Activated CD8-positive, alpha-beta T cell treated with anti-CD3 and anti-CD28 coated beads, Interleukin-2, amount 10 ng/mL, durations not matched to agents 7 days and 5 days (primary cell): ENCODE measurements at regions of chr19 and their contacts with region 1.

Region 1: DNA sequence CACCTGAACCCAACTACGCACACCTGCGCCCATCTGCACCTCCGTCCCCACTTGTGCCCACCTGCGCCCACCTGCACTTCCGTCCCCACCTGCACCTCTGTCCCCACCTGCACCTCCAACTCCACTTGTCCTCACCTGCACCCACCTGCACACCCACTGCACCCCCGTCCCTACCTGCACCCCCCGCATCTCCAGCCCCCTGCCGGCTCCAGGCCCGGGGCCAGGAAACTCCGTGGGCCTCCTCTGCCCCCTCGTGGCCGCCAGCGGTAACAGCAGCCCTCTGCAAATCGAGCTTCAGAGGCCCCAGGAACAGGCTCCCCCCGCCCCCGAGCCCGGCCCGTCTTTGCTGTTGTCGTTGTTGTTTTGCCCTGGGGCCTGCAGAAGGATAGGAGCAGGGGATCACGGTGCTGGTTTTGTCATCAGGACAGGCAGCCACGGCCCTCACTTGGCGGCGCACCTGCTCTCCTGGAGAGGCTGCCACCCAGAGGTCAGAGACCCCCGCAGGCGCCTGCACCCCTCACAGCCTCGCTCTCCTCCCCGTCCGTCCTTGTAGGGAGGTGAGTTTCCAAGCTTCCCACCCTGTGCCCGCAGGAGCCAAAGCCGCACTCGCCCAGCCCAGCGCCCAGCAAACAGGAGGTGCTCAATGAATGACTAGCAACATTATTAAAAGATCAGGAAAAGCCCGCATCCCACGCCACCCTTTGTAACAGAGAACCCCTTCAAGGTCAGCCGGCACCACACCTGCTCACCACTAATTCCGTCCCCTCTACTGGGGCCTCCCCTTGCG is 65.4 kb downstream of the GNG7 start:
- DNase-seq: peak; percentile 84
- ATAC-seq: peak; percentile 84
- H3K4me3 Mint-ChIP-seq: no peak overlapping the region
- H3K27ac Mint-ChIP-seq: no peak overlapping the region
- H3K4me1 Mint-ChIP-seq: peaks cover 14% of the 10 kb centered on the region
- H3K27me3 Mint-ChIP-seq: peaks cover 4% of the 10 kb centered on the region

Region 2: DNA sequence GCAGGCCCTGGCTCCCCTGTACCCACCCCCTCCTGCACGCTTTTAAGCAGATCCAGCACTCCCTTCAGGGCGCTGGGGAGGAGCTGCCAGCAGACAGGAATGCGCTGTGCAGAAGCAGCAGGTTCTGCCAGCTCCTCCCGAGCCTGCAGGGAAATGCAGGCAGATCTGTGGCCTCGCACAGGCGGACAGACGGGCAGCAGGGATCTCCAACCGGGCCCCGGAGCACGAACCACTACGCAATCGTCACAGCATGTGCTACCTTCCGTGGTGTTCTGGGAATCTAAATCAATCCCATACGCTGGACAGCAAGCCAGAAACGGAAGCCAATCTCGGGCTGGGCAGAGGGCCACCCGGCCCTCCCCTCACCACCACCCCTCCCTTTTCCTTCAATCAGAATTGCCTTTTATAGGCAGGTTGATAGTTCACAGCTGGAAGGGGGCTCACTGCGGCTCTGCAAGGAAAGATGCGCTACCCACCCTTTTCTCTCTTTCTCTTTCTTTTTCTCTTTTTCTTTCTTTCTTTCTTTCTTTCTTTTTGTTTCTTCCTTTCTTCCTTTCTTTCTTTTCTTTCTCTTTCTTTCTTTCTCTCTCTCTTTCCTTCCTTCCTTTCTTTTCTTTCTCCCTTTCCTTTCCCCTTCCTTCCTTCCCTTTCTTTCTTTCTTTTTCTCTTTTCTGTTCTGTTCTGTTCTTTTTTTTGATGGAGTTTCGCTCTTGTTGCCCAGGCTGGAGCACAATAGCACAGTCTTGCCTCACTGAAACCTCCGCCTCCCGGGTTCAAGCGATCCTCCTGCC is 34.5 kb before region 1 on chr19:
- CTCF ChIA-PET with region 1: interaction called, 14 read pairs
- POLR2A ChIA-PET with region 1: no interaction called
- DNase-seq: no peak
- ATAC-seq: no peak
- H3K4me3 Mint-ChIP-seq: no peak overlapping the region
- H3K27ac Mint-ChIP-seq: no peak overlapping the region
- H3K4me1 Mint-ChIP-seq: peaks cover 22% of the 10 kb centered on the region
- H3K27me3 Mint-ChIP-seq: no peaks in the 10 kb centered on the region

Region 3: DNA sequence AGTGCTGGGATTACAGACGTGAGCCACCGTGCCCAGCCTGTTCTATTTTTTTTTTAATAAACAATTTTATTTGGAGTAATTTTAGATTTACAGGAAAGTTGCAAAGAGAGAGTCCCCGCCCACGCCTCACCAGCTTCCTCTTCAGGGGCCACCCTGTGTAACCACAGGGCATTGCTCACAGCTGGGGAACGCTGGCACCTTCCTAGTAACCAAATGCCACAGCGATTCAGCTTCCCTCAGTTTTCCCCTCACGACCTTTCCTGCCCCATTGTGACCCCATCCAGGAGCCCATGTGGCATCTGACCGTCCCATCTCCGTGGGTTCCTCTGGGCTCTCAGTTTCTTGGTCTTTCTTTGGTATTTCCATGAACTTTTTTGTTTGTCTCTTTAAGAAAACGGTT is 18.5 kb before region 1 on chr19:
- CTCF ChIA-PET with region 1: interaction called, 67 read pairs
- POLR2A ChIA-PET with region 1: interaction called, 5 read pairs
- DNase-seq: peak; percentile 64
- ATAC-seq: no peak
- H3K4me3 Mint-ChIP-seq: peak overlapping the region; percentile 12
- H3K27ac Mint-ChIP-seq: peak overlapping the region; percentile 95
- H3K4me1 Mint-ChIP-seq: peaks cover 73% of the 10 kb centered on the region
- H3K27me3 Mint-ChIP-seq: no peaks in the 10 kb centered on the region

Region 4: GRCh38 chr19:2719910-2720776 is 83.1 kb after region 1 on chr19:
- CTCF ChIA-PET with region 1: no interaction called
- POLR2A ChIA-PET with region 1: no interaction called
- DNase-seq: no peak
- ATAC-seq: no peak
- H3K4me3 Mint-ChIP-seq: no peak overlapping the region
- H3K27ac Mint-ChIP-seq: no peak overlapping the region
- H3K4me1 Mint-ChIP-seq: no peaks in the 10 kb centered on the region
- H3K27me3 Mint-ChIP-seq: peaks cover 19% of the 10 kb centered on the region